IMR-90 (cell line): ENCODE measurements at regions of chr6 and their contacts with region 1.

Region 1: GRCh38 chr6:14584450-14584849 is 466.9 kb downstream of the CD83 start:
- DNase-seq: peak; percentile 22
- ATAC-seq: no peak
- H3K4me3 ChIP-seq: no peak overlapping the region
- H3K27ac ChIP-seq: no peak overlapping the region
- H3K4me1 ChIP-seq: no peaks in the 10 kb centered on the region
- H3K27me3 ChIP-seq: peaks cover 6% of the 10 kb centered on the region
- CTCF ChIP-seq: no peak
- POLR2A ChIP-seq: no peak
- RAD21 ChIP-seq: peak; percentile 21; the same call in 1 of the 2 replicates

Region 2: GRCh38 chr6:14616656-14617055 is 32.2 kb after region 1 on chr6:
- CTCF ChIA-PET with region 1: no interaction called
- POLR2A ChIA-PET with region 1: no interaction called
- dilution Hi-C with region 1: no loop called
- in situ Hi-C with region 1: no loop called
- intact Hi-C with region 1: loop called (anchors 1 kb)
- DNase-seq: no peak
- ATAC-seq: no peak
- H3K4me3 ChIP-seq: no peak overlapping the region
- H3K27ac ChIP-seq: no peak overlapping the region
- H3K4me1 ChIP-seq: peaks cover 4% of the 10 kb centered on the region
- H3K27me3 ChIP-seq: no peaks in the 10 kb centered on the region; the same call in 1 of the 2 replicates
- CTCF ChIP-seq: no peak
- POLR2A ChIP-seq: no peak
- RAD21 ChIP-seq: no peak

Region 3: GRCh38 chr6:15017261-15017660 is 432.8 kb after region 1 on chr6:
- CTCF ChIA-PET with region 1: no interaction called
- POLR2A ChIA-PET with region 1: no interaction called
- dilution Hi-C with region 1: no loop called
- in situ Hi-C with region 1: no loop called
- intact Hi-C with region 1: loop called (anchors 5 kb)
- DNase-seq: peak; percentile 17
- ATAC-seq: peak; percentile 54
- H3K4me3 ChIP-seq: no peak overlapping the region
- H3K27ac ChIP-seq: no peak overlapping the region
- H3K4me1 ChIP-seq: peaks cover 2% of the 10 kb centered on the region; the same call in 1 of the 2 replicates
- H3K27me3 ChIP-seq: peaks cover 4% of the 10 kb centered on the region; the same call in 1 of the 2 replicates
- CTCF ChIP-seq: no peak
- POLR2A ChIP-seq: no peak
- RAD21 ChIP-seq: no peak

Region 4: GRCh38 chr6:15817121-15817520 is 1232.7 kb after region 1 on chr6:
- CTCF ChIA-PET with region 1: no interaction called
- POLR2A ChIA-PET with region 1: no interaction called
- dilution Hi-C with region 1: no loop called
- in situ Hi-C with region 1: no loop called
- intact Hi-C with region 1: no loop called
- DNase-seq: no peak
- ATAC-seq: no peak
- H3K4me3 ChIP-seq: no peak overlapping the region
- H3K27ac ChIP-seq: no peak overlapping the region
- H3K4me1 ChIP-seq: no peaks in the 10 kb centered on the region
- H3K27me3 ChIP-seq: peaks cover 17% of the 10 kb centered on the region
- CTCF ChIP-seq: no peak
- POLR2A ChIP-seq: no peak
- RAD21 ChIP-seq: no peak